Ovary (tissue), 10 donors: ENCODE measurements at regions of chr1 and their contacts with region 1.

Region 1: GRCh38 chr1:2381741-2382620 is 9.4 kb downstream of the MORN1 start:
- DNase-seq: peak; percentile 84 to 90 (median 87)
- H3K4me3 ChIP-seq: no peak overlapping the region
- H3K27ac ChIP-seq: peak overlapping the region in 1 of 2 donors; percentile 45
- H3K4me1 ChIP-seq: peaks cover 4% of the 10 kb centered on the region
- H3K27me3 ChIP-seq: no peaks in the 10 kb centered on the region
- CTCF ChIP-seq: peak; percentile 81 to 97 (median 95)
- EP300 ChIP-seq: no peak
- POLR2A ChIP-seq: peak; percentile 31

Region 2: DNA sequence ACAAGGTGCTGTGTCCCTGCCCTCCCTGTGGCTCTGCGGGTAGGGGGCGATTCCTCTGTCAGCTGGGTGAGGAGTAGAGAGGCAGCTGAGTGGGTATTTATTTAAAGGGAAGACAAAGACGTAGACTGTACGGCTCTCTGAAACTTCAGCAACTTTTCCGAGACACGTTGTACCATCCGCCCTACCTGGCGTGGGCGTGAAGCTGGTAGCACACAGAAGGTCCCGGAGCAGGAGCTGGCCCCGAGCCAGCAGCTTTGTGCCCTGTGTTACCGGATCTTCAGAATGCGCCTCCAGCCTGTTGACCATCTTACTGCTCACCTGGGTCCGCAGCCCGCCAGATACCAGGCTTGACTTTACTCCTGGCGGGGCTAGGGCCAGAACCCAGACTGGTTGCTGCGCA is 296.9 kb before region 1 on chr1:
- intact Hi-C with region 1: no loop called
- DNase-seq: no peak
- H3K4me3 ChIP-seq: no peak overlapping the region
- H3K27ac ChIP-seq: no peak overlapping the region
- H3K4me1 ChIP-seq: no peaks in the 10 kb centered on the region
- H3K27me3 ChIP-seq: no peaks in the 10 kb centered on the region
- CTCF ChIP-seq: no peak
- EP300 ChIP-seq: no peak
- POLR2A ChIP-seq: no peak

Region 3: DNA sequence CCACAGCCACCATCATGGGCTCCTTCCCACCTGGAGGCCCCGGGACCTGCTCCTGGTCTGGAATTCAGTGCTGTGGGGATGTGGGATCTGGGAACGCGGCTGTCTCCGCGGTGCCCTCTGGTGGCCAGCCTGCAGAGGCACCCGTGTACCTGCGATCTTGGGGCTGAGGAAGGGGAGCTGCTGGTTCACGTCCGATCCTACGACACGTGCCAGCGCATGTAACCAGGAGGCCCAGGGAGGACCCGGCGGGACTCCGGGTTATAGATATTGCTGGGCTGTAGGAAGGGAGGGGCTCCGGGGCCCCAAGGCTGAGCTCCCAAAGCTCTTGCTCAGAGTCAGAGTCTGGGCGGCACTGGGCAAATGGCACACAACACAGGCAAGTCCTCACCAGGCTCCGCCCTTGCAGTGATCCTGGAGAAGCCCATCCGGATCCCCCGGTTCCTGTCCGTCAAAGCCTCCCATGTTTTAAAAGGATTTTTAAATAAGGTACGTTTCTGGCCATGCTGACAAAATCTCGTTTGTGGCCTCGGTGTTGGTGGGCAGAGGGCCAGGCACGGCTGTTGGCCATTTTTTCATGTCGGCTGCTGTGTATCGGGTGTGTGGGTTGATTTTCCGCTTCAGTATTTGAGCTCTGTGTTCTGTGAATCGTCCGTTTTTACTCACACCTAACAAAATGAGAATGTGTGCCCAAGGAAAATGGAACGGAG is 207.5 kb before region 1 on chr1:
- intact Hi-C with region 1: loop called in 1 of 4 experiments (anchors 5 kb)
- DNase-seq: peak; percentile 66 to 80 (median 76)
- H3K4me3 ChIP-seq: peak overlapping the region; percentile 20
- H3K27ac ChIP-seq: peak overlapping the region in 1 of 2 donors; percentile 6
- H3K4me1 ChIP-seq: peaks cover 9% of the 10 kb centered on the region
- H3K27me3 ChIP-seq: no peaks in the 10 kb centered on the region
- CTCF ChIP-seq: peak; percentile 74 to 94 (median 86)
- EP300 ChIP-seq: no peak
- POLR2A ChIP-seq: no peak

Region 4: GRCh38 chr1:2194898-2195673 is 186.9 kb before region 1 on chr1:
- intact Hi-C with region 1: loop called (anchors 1 to 5 kb)
- DNase-seq: peak; percentile 89 to 92 (median 91)
- H3K4me3 ChIP-seq: peak overlapping the region; percentile 72
- H3K27ac ChIP-seq: peak overlapping the region; percentile 93 to 97
- H3K4me1 ChIP-seq: peaks cover 27% of the 10 kb centered on the region
- H3K27me3 ChIP-seq: no peaks in the 10 kb centered on the region
- CTCF ChIP-seq: peak; percentile 89 to 99 (median 93)
- EP300 ChIP-seq: no peak
- POLR2A ChIP-seq: peak; percentile 10

Region 5: GRCh38 chr1:2204516-2205190 is 177.3 kb before region 1 on chr1:
- intact Hi-C with region 1: loop called in 3 of 4 experiments (anchors 1 to 5 kb)
- DNase-seq: peak; percentile 86 to 94 (median 90)
- H3K4me3 ChIP-seq: peak overlapping the region; percentile 40
- H3K27ac ChIP-seq: peak overlapping the region; percentile 78 to 84
- H3K4me1 ChIP-seq: peaks cover 26% of the 10 kb centered on the region
- H3K27me3 ChIP-seq: no peaks in the 10 kb centered on the region
- CTCF ChIP-seq: no peak
- EP300 ChIP-seq: no peak
- POLR2A ChIP-seq: peak; percentile 53

Region 6: DNA sequence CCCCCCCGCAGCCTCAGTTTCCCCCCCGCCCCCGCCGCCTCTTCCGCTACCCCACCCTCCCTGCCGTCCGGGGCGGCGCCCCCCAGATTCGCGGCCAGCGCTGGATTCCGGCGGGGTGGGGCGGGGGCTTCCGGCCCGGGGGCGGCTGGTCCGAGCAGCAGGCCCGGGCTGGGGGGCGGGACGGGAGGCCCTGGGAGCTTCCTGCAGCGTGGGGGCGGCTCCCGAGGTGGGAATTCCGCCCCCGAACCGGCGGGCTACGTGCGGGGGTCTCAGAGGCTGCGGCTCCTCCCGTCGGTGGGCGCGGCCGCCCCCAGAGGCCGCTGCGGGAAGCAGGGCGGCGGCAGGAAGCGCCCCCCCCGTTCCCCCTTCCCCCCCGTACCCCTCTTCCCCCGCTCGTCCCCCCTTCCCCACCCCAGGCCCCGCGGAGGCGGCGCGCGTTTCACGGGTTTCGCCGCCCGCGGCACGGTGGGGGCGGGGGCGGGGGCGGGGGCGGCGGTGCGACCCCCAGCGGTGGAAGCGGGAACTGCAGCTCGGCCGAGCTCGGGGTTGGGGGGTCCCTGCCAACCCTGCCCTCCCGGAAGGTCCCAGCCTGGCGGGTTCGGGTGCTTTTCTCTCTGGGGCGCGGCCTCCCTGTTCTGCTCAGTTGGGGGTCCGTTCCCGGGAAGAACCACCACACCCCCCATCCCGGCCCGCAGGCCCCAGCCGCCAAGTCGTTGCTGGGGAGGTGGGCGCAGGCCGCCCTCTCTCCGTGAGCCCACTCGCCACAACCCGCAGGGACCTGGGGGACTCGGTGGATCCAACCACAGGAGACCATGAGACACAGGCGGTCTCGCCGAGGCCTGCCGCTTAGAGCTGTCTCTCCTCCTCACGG is 66.9 kb before region 1 on chr1:
- intact Hi-C with region 1: loop called in 2 of 4 experiments (anchors 5 kb)
- DNase-seq: peak; percentile 75 to 84 (median 83)
- H3K4me3 ChIP-seq: peak overlapping the region; percentile 54
- H3K27ac ChIP-seq: peak overlapping the region; percentile 61 to 75
- H3K4me1 ChIP-seq: peaks cover 25% of the 10 kb centered on the region
- H3K27me3 ChIP-seq: no peaks in the 10 kb centered on the region
- CTCF ChIP-seq: peak; percentile 68 to 95 (median 80)
- EP300 ChIP-seq: no peak
- POLR2A ChIP-seq: no peak

Region 7: GRCh38 chr1:2322065-2322571 is 59.9 kb before region 1 on chr1:
- intact Hi-C with region 1: loop called in 2 of 4 experiments (anchors 5 kb)
- DNase-seq: peak; percentile 81 to 91 (median 85)
- H3K4me3 ChIP-seq: peak overlapping the region; percentile 7
- H3K27ac ChIP-seq: peak overlapping the region; percentile 66 to 72
- H3K4me1 ChIP-seq: peaks cover 23% of the 10 kb centered on the region
- H3K27me3 ChIP-seq: no peaks in the 10 kb centered on the region
- CTCF ChIP-seq: no peak
- EP300 ChIP-seq: no peak
- POLR2A ChIP-seq: no peak

Region 8: GRCh38 chr1:2411801-2412518 is 30.0 kb after region 1 on chr1:
- intact Hi-C with region 1: no loop called
- DNase-seq: peak in 1 of 5 donors; percentile 61
- H3K4me3 ChIP-seq: peak overlapping the region; percentile 87
- H3K27ac ChIP-seq: peak overlapping the region; percentile 55 to 85
- H3K4me1 ChIP-seq: peaks cover 6% of the 10 kb centered on the region
- H3K27me3 ChIP-seq: no peaks in the 10 kb centered on the region
- CTCF ChIP-seq: no peak
- EP300 ChIP-seq: no peak
- POLR2A ChIP-seq: peak; percentile 47